ENCODE measurements at regions of chr19 and their contacts with region 1.

Region 1: DNA sequence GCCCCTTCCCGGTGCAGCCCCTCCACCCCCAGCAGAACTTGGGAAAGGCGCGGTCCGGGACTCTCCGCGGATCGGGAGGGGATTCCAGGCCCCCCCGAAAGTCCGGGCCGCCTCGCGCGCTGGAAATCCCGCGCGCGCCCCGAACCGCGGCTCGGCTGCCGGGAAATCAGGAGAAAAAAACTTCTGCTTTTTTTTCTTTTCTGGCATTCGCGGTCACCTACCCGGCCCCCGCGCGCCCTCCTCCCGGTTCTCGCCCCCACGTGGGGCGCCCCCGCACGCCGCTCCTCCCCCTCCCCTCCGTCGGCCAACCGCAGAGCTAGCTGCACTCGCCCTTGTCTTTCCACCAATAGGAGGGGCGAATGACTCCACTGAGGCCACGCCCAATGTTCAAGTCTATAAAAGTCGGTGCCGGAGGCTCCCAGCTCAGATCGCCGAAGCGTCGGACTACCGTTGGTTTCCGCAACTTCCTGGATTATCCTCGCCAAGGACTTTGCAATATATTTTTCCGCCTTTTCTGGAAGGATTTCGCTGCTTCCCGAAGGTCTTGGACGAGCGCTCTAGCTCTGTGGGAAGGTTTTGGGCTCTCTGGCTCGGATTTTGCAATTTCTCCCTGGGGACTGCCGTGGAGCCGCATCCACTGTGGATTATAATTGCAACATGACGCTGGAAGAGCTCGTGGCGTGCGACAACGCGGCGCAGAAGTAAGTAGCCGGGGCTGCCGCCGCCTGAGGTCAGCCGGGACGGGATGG is at the start of gene GADD45B:
- DNase-seq: peak; percentile 90 to 97
- H3K4me3 ChIP-seq: peak within 1 kb of the TSS; percentile 56 to 81 (median 76)
- H3K27ac ChIP-seq: no peak within 1 kb of the TSS
- H3K4me1 ChIP-seq: peaks cover 0 to 14% (median 13%) of the 10 kb centered on the region in 4 experiments; a peak in 6 of 7 replicates
- H3K27me3 ChIP-seq: peaks cover 10 to 40% (median 34%) of the 10 kb centered on the region in 4 experiments
- CTCF ChIP-seq: no peak
- EP300 ChIP-seq: no peak
- POLR2A ChIP-seq: peak; percentile 100
- RAD21 ChIP-seq: no peak
- total RNA-seq, gene GADD45B: 11.0 and 11.4 TPM in 2 replicates

Region 2: GRCh38 chr19:2427429-2428320 is 48.2 kb before region 1 on chr19 and contains the start of gene TIMM13:
- CTCF ChIA-PET with region 1: no interaction called
- POLR2A ChIA-PET with region 1: interaction called, 11 read pairs
- DNase-seq: peak; percentile 95 to 99
- H3K4me3 ChIP-seq: peak within 1 kb of the TSS; percentile 77 to 93 (median 87)
- H3K27ac ChIP-seq: peak within 1 kb of the TSS; percentile 99
- H3K4me1 ChIP-seq: peaks cover 0 to 18% (median 13%) of the 10 kb centered on the region in 4 experiments; a peak in 5 of 7 replicates
- H3K27me3 ChIP-seq: no peaks in the 10 kb centered on the region
- CTCF ChIP-seq: no peak
- EP300 ChIP-seq: no peak
- POLR2A ChIP-seq: peak in 1 of 2 experiments; percentile 59; a peak in 1 of 3 replicates
- RAD21 ChIP-seq: no peak
- total RNA-seq, gene TIMM13: 275 and 277 TPM in 2 replicates

Region 3: GRCh38 chr19:2503521-2504109 is 27.7 kb after region 1 on chr19:
- CTCF ChIA-PET with region 1: interaction called, 7 read pairs
- POLR2A ChIA-PET with region 1: interaction called, 216 read pairs
- DNase-seq: no peak
- H3K4me3 ChIP-seq: no peak overlapping the region
- H3K27ac ChIP-seq: no peak overlapping the region
- H3K4me1 ChIP-seq: peaks cover 0 to 4% (median 2%) of the 10 kb centered on the region in 4 experiments; a peak in 4 of 7 replicates
- H3K27me3 ChIP-seq: no peaks in the 10 kb centered on the region
- CTCF ChIP-seq: no peak
- EP300 ChIP-seq: no peak
- POLR2A ChIP-seq: no peak
- RAD21 ChIP-seq: no peak

Region 4: DNA sequence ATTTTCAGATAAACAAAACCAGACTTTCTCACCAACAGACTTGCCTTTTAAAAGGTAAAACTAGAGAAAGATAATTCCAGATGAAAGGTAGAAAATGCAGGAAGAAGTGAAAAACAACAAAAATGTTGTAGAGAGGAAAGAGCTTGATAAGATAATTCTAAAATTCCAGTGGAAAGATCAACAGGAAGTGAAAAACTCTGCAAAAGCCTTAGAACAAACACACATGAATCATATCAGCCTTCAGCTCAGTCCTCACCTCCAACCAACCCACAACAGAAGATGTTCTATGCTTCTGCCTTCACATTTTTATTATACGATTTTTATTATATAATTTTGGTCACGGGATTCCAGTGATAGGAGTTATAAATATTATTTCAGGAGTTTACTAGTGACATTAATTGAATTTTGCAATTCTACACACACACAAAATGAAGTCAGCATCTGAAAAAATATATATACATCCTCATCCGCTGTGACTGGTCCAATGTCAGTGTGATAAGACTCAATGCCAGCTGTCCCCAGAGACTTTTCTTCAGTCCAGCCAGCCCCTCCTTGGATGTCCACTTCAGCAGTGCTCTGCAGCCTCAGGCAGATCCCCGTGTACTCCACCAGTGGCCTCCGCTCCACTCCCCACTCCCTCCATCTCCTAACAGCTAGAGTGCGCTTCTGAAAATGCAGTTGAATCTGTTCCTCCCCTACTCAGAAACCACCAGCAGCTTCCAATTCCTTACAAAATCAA is 58.0 kb after region 1 on chr19:
- CTCF ChIA-PET with region 1: interaction called, 3 read pairs
- POLR2A ChIA-PET with region 1: interaction called, 28 read pairs
- DNase-seq: no peak
- H3K4me3 ChIP-seq: no peak overlapping the region
- H3K27ac ChIP-seq: no peak overlapping the region
- H3K4me1 ChIP-seq: no peaks in the 10 kb centered on the region; a peak in 1 of 7 replicates
- H3K27me3 ChIP-seq: no peaks in the 10 kb centered on the region
- CTCF ChIP-seq: no peak
- EP300 ChIP-seq: no peak
- POLR2A ChIP-seq: no peak
- RAD21 ChIP-seq: no peak

Region 5: DNA sequence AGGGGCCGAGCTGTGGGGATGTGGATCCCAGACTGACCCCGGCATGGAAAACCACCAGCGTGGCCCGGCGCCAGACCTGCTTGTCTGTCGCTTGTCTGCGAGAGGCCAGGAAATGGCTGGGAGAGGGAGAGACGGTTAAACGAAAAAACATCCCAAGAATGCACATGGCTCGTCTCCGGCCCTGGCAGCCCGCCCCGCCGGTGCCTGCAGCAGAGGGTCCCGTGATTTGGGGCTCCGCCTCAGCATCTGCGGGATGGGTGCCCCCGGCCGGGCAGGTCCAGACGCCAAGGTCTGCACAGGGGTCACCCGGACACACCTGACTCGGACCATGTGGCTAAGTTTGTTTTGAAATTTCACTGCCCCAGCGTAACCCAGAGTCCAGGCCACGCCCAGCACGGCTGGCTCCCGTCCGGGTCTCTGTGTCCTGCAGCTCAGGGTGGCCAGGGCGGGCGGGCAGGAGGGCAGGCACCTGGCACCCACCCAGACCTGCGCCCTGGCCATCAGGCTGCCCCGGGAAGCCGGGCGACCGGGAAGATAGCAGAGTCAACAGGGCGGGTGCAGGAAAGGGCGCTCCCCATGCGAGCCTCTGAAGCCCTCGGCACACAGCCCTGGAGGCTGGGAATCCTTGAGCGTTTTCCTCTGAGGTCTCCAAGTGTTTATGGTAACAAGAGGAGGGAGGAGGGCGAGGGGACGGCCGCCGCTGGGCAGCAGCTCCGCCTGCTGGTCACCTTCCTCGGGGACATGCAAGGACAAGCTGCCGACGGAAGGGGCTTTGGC is 103.2 kb after region 1 on chr19:
- CTCF ChIA-PET with region 1: interaction called, 48 read pairs
- POLR2A ChIA-PET with region 1: interaction called, 102 read pairs
- DNase-seq: peak; percentile 76 to 91
- H3K4me3 ChIP-seq: peak overlapping the region; percentile 26 to 71 (median 58)
- H3K27ac ChIP-seq: no peak overlapping the region
- H3K4me1 ChIP-seq: peaks cover 4 to 17% (median 12%) of the 10 kb centered on the region in 4 experiments
- H3K27me3 ChIP-seq: no peaks in the 10 kb centered on the region; a peak in 1 of 7 replicates
- CTCF ChIP-seq: peak; percentile 88 to 96 (median 91)
- EP300 ChIP-seq: no peak
- POLR2A ChIP-seq: no peak
- RAD21 ChIP-seq: peak; percentile 88 to 91

Region 6: DNA sequence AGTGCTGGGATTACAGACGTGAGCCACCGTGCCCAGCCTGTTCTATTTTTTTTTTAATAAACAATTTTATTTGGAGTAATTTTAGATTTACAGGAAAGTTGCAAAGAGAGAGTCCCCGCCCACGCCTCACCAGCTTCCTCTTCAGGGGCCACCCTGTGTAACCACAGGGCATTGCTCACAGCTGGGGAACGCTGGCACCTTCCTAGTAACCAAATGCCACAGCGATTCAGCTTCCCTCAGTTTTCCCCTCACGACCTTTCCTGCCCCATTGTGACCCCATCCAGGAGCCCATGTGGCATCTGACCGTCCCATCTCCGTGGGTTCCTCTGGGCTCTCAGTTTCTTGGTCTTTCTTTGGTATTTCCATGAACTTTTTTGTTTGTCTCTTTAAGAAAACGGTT is 142.7 kb after region 1 on chr19:
- CTCF ChIA-PET with region 1: interaction called, 133 read pairs
- POLR2A ChIA-PET with region 1: interaction called, 135 read pairs
- DNase-seq: no peak
- H3K4me3 ChIP-seq: no peak overlapping the region
- H3K27ac ChIP-seq: no peak overlapping the region
- H3K4me1 ChIP-seq: peaks cover 0 to 3% (median 0%) of the 10 kb centered on the region in 4 experiments; a peak in 1 of 7 replicates
- H3K27me3 ChIP-seq: peaks cover 0 to 7% (median 2%) of the 10 kb centered on the region in 4 experiments; a peak in 1 of 7 replicates
- CTCF ChIP-seq: no peak
- EP300 ChIP-seq: no peak
- POLR2A ChIP-seq: no peak
- RAD21 ChIP-seq: no peak